ENCODE measurements at regions of chr9 and their contacts with region 1.

Region 1: DNA sequence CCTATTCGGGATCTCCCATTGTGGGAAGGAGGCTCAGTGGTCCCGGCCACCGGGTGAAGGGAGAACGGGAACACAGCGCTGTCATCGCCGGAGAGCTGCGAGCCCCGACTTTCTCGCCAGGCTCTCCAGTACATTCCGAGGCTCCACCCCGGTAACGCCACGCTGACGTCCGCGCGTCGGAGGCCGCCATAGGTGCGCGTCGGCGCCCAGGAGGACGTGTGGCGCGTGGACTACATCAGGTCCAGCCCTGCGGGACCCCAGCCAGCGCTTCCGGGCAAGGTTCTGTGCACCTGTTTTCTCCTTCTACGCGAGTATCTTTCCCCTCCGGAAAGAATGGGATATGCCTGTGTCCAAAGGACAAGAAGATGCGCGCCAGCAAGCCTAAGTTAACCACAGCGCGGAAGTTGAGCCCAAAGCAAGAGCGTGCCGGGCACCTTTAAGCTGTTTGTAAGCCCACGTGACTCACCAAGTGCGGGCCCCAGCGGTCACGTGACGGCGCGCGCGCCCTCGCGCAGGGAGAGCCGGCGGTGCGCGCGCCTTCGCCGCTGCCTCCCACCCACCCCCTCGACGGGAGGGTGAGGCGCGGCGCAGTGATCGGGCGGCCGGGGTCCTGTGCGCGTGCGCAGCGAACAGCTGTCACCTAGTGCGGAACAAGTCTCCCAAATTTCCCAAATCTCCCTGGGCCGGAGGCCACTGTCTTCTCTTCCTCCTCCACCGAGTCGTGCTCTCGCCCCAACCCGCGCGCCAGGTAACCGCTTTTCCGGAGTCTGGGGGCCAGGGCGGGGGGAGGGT is at the start of gene KDM4C:
- DNase-seq: peak; percentile 98
- ATAC-seq: peak; percentile 94
- total RNA-seq, gene KDM4C: 14.2 TPM

Region 2: GRCh38 chr9:6681147-6681956 is 76.3 kb before region 1 on chr9:
- intact Hi-C with region 1: loop called (anchors 10 kb)
- DNase-seq: peak; percentile 99
- ATAC-seq: peak; percentile 99

Measured in left ventricle myocardium superior (tissue), 1 donor.